ENCODE measurements at regions of chr4 and their contacts with region 1.

Region 1: GRCh38 chr4:80173401-80173800 is 23.9 kb upstream of the PRDM8 start:
- DNase-seq: peak; percentile 89
- H3K4me3 Mint-ChIP-seq: peak overlapping the region; percentile 68
- H3K27ac Mint-ChIP-seq: peak overlapping the region; percentile 95
- H3K4me1 Mint-ChIP-seq: peaks cover 50% of the 10 kb centered on the region
- H3K27me3 Mint-ChIP-seq: no peaks in the 10 kb centered on the region

Region 2: GRCh38 chr4:80138551-80139538 is 34.6 kb before region 1 on chr4:
- intact Hi-C with region 1: loop called (anchors 1 kb)
- DNase-seq: peak; percentile 88
- H3K4me3 Mint-ChIP-seq: peak overlapping the region; percentile 56
- H3K27ac Mint-ChIP-seq: peak overlapping the region; percentile 80
- H3K4me1 Mint-ChIP-seq: peaks cover 59% of the 10 kb centered on the region
- H3K27me3 Mint-ChIP-seq: no peaks in the 10 kb centered on the region

Measured in activated CD4-positive, alpha-beta T cell treated with anti-CD3 and anti-CD28 coated beads, Interleukin-2, amount 10 ng/mL, durations not matched to agents 24 days and 14 days (primary cell).